Activated CD4-positive, alpha-beta memory T cell treated with anti-CD3 and anti-CD28 coated beads for 36 hours (primary cell): ENCODE measurements at regions of chr11 and their contacts with region 1.

Region 1: GRCh38 chr11:125592305-125593112 is at the start of gene STT3A:
- DNase-seq: peak; percentile 99
- H3K4me3 Mint-ChIP-seq: peak within 1 kb of the TSS; percentile 94
- H3K27ac Mint-ChIP-seq: peak within 1 kb of the TSS; percentile 95
- H3K4me1 Mint-ChIP-seq: peaks cover 44% of the 10 kb centered on the region
- H3K27me3 Mint-ChIP-seq: no peaks in the 10 kb centered on the region
- total RNA-seq, gene STT3A: 121 to 132 TPM

Region 2: GRCh38 chr11:125514336-125515101 is 78.0 kb before region 1 on chr11:
- CTCF ChIA-PET with region 1: interaction called, 5 read pairs
- POLR2A ChIA-PET with region 1: no interaction called
- intact Hi-C with region 1: loop called (anchors 1 kb)
- DNase-seq: peak; percentile 79
- H3K4me3 Mint-ChIP-seq: no peak overlapping the region
- H3K27ac Mint-ChIP-seq: peak overlapping the region; percentile 82
- H3K4me1 Mint-ChIP-seq: peaks cover 25% of the 10 kb centered on the region
- H3K27me3 Mint-ChIP-seq: no peaks in the 10 kb centered on the region

Region 3: GRCh38 chr11:125625630-125626287 is 33.2 kb after region 1 on chr11:
- CTCF ChIA-PET with region 1: interaction called, 9 read pairs
- POLR2A ChIA-PET with region 1: interaction called, 36 read pairs
- intact Hi-C with region 1: loop called (anchors 1 kb)
- DNase-seq: peak; percentile 92
- H3K4me3 Mint-ChIP-seq: peak overlapping the region; percentile 88
- H3K27ac Mint-ChIP-seq: peak overlapping the region; percentile 93
- H3K4me1 Mint-ChIP-seq: peaks cover 21% of the 10 kb centered on the region
- H3K27me3 Mint-ChIP-seq: no peaks in the 10 kb centered on the region

Region 4: DNA sequence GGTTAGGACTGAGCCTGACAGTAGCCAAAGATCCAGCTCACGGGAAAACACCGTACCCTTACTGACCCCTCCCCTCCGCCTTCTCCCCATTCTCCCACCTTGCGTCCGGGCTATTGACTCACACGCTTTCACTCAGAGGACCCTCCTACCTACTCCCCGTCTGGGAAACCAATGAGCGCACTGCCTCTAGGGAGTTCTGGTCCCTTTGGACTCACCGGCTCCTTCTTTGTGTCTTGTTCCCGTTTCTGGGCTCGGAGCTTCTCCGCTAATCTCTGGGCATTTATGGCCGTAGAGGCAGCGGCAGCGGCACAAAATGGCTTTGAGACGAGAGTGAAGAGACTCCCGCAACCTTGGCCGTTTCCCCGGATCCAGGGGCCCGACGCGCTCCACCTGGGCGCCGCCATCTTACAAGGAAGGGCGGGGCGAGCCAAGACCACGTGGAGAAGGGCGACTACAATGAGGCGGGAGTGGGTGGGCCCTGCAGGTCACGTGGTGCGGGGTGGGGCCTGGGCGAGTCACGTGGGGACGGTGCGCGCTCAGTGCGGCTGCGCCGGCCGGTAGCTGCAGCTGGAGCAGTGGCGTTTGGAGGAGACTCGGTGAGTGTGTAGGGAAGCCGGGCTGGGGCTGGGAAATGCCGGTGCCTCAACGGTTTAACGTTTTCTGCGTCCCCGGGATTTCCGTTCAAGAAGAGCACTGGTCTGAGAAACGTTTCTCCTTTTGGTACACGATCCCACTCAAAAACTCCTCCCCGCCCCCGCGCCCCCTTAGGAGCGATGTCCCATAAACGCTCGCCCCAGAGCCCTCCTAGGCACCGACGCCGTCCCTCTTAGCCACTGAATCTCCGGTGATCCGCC is 619.0 kb after region 1 on chr11 and contains the starts of genes FAM118B and RPUSD4:
- CTCF ChIA-PET with region 1: no interaction called
- POLR2A ChIA-PET with region 1: no interaction called
- intact Hi-C with region 1: loop called (anchors 1 kb)
- DNase-seq: peak; percentile 99
- H3K4me3 Mint-ChIP-seq: peak within 1 kb of the TSS; percentile 98
- H3K27ac Mint-ChIP-seq: peak within 1 kb of the TSS; percentile 89
- H3K4me1 Mint-ChIP-seq: peaks cover 41% of the 10 kb centered on the region
- H3K27me3 Mint-ChIP-seq: no peaks in the 10 kb centered on the region
- total RNA-seq, gene FAM118B: 8.0 to 9.7 TPM
- total RNA-seq, gene RPUSD4: 32.4 to 34.1 TPM